ENCODE measurements at regions of chrX and their contacts with region 1.

Region 1: DNA sequence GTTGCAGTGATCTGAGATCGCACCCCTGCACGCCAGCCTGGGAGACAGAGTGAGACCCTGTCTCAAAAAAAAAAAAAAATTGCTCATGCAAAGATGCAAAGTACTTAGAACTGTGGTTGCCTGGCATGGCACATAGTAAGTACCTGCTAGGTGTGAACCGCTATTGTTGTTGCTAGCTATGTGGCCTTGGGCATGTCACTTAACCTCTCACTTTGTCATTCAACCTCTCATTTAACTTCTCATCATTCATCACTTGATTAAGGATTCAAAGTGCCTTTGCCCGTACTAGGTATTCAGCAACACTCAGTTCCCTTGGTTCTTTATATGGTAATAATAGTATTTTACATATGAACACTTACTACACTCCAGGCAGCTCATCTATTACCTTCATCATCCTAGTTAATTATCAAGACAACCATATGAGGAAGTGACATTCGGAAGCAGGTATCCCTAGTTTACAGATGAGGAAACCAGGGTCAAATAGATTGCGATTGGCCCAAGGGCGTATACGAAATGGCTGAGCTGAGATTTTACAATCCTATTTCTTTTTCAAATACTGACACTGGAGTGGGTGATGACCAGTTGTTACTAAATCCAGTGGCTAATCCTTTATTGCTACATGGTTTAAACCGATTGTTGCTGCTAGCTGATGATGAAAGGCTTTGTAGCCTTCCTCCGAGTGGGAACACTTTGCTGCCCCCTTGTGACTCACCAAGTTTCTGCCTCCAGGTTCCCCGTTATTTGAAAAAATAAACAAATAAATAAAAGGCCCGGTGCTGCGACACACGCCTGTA is 28.8 kb upstream of the SOWAHD start:
- DNase-seq: peak in 4 of 6 donors; percentile 11 to 56 (median 34)
- ATAC-seq: peak; percentile 61 to 80 (median 78)
- H3K4me3 ChIP-seq: no peak overlapping the region
- H3K27ac ChIP-seq: no peak overlapping the region
- H3K4me1 ChIP-seq: no peaks in the 10 kb centered on the region
- H3K27me3 ChIP-seq: peaks cover 0 to 4% (median 2%) of the 10 kb centered on the region in 4 donors
- CTCF ChIP-seq: peak; percentile 13 to 36 (median 34)

Region 2: DNA sequence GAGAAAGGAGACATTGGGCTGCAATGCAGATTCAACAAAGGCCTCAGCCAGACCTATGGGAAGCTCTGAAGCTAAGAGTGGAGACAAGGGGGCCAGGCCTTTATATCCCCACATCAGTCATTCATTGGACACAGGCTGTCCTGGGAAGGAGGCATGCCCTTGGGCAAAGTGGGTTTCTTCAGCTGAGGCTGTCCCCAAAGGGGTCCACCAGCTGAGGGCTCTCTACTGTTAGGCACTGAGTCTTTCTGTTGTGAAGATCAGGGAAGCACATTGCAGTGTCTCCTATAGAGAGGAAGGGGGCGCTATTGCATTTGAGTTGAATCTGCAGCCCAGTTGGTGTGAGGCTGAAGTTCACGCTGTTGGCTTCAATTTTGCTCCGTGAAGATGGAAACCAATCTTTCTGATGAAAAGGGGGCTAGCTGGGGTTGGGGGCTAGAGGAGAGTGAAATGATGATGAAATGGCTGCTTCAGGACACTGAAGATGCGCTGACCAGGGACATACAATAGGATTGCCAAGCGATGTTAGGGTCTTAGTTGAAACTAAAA is 213.4 kb before region 1 on chrX:
- intact Hi-C with region 1: loop called in 1 of 3 experiments (anchors 10 kb)
- DNase-seq: peak in 3 of 6 donors; percentile 2 to 26 (median 23)
- ATAC-seq: peak; percentile 72 to 92 (median 88)
- H3K4me3 ChIP-seq: no peak overlapping the region
- H3K27ac ChIP-seq: no peak overlapping the region
- H3K4me1 ChIP-seq: no peaks in the 10 kb centered on the region
- H3K27me3 ChIP-seq: no peaks in the 10 kb centered on the region
- CTCF ChIP-seq: peak; percentile 69 to 71 (median 70)

Region 3: DNA sequence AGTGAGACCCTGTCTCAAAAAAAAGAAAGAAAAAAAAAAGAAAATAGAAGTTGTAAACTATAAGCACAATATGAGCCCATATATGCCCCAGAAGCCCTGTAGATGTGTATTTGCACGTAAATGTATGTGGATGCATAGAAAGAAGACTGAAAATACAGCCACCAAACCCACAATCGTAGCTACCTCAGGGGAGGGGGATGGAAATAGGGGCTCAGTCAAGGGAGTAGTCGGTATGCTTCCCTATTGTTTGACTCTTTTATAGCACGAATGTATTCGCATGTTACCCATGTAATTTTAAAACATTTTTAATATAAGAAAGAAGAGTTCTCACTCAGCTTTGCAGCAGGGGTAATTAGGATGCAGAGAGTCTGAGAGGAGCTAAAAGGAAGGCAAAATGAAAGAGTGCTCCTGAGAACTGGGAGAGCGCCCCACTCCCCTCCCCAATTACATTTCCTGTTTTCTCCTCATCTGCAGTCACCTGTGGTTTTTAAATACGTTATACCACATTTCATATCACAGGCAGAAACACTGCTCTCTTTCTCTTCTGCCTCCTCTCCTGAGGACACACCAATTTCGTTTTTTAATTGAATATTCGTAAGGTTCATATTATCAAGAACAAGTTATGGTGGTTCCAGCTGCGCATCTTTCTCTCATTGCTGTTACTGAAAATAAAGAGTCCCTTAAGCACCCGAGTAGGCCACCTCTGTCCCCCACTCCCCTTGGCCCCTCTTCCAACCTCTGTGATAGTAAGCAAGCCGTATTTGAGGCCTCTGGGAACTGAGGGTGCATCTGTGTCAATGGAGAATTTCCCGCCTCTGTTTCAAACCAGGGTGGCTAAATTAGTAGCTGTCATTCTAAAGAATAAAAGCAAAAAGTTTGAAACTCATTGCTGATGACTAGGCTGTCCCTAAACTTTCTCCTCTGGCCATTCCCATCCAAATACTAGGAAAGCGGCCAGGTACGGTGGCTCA is 47.3 kb before region 1 on chrX:
- intact Hi-C with region 1: no loop called
- DNase-seq: no peak
- ATAC-seq: no peak
- H3K4me3 ChIP-seq: no peak overlapping the region
- H3K27ac ChIP-seq: peak overlapping the region in 1 of 4 donors; percentile 12
- H3K4me1 ChIP-seq: no peaks in the 10 kb centered on the region
- H3K27me3 ChIP-seq: no peaks in the 10 kb centered on the region
- CTCF ChIP-seq: no peak